MCF 10A (cell line): ENCODE measurements at regions of chr16 and their contacts with region 1.

Region 1: DNA sequence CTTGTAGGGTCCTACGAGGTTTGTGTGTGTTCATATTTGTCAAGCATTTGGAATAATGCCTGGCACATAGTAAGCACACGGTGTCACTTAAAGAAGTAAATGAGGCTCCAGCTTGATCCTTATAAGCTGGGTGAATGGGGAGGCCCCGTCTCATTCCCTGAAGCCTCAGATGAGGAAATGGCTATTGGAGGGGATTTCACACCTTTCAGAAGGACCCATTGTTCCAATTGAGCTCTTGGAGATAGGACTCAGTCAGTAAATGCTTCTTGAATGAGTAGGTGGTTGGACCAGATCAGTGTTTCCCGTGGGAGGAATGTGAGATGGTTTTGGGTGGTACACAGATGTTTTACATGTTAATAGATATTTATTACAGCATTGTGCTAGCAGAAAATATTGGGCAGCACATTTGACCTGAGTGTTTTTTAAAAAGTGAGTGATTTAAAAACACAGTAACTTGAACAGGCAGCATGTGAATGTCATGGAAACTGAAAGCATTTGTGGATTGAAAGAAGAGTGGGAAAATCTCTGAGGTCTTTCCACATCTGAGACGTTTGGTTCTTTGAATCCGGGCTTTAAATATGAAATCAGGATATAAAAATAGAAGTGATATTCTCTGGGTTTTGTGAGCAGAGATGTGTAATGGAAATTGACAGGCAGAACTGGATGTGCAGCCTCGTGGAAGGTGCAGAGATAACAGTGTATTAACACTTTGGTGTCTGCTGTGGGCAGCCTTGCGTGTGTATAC is 36.4 kb upstream of the ARHGAP17 start:
- DNase-seq: no peak
- H3K4me3 Mint-ChIP-seq: no peak overlapping the region
- H3K27ac Mint-ChIP-seq: peak overlapping the region; percentile 23
- H3K4me1 Mint-ChIP-seq: peaks cover 20% of the 10 kb centered on the region
- H3K27me3 Mint-ChIP-seq: no peaks in the 10 kb centered on the region
- CTCF ChIP-seq: no peak

Region 2: DNA sequence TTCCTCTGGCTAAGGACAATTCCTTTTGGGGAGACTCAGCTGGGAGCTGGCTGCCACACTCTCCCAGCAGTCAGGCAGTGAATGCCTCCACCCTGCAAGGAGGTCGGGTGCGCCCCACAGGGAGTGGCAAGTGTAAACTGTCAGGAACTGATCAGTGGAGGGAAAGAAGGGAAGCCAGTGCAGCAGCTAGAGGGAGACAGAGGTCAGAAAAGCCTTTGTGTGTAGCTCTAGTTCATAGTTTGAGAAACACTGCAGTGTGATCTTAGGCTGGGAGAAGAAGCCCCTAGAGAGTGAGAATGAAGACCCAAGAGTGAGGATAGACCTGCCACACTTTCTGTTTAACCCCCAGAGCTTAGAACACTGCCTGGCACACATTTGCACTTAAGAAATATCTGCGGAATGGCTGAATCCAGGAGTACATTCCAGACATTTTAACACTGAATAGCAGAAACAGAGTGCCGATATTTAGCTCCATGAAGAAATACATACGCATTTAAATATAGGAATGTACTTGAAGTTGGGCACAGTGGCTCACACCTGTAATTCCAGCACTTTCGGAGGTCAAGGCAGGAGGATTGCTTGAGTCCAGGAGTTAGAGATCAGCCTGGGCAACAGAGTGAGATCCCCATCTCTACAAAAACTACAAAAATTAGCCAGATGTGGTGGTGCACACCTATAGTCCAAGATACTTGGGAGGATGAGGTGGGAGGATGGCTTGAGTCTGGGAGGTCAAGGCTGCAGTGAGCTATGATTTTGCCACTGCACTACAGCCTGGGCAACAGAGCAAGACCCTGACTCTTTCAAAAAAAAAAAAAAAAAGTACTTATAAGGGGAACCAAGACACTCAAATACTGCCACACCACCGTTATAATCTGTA is 216.9 kb before region 1 on chr16:
- CTCF ChIA-PET with region 1: interaction called, 3 read pairs
- POLR2A ChIA-PET with region 1: no interaction called
- intact Hi-C with region 1: loop called (anchors 1 kb)
- DNase-seq: peak; percentile 66
- H3K4me3 Mint-ChIP-seq: no peak overlapping the region
- H3K27ac Mint-ChIP-seq: no peak overlapping the region
- H3K4me1 Mint-ChIP-seq: peaks cover 10% of the 10 kb centered on the region
- H3K27me3 Mint-ChIP-seq: no peaks in the 10 kb centered on the region
- CTCF ChIP-seq: peak; percentile 52

Region 3: GRCh38 chr16:25014500-25015147 is 37.0 kb before region 1 on chr16:
- CTCF ChIA-PET with region 1: interaction called, 4 read pairs
- POLR2A ChIA-PET with region 1: interaction called, 13 read pairs
- intact Hi-C with region 1: loop called (anchors 2 kb)
- DNase-seq: peak; percentile 49
- H3K4me3 Mint-ChIP-seq: peak overlapping the region; percentile 95
- H3K27ac Mint-ChIP-seq: peak overlapping the region; percentile 97
- H3K4me1 Mint-ChIP-seq: peaks cover 22% of the 10 kb centered on the region
- H3K27me3 Mint-ChIP-seq: no peaks in the 10 kb centered on the region
- CTCF ChIP-seq: no peak

Region 4: DNA sequence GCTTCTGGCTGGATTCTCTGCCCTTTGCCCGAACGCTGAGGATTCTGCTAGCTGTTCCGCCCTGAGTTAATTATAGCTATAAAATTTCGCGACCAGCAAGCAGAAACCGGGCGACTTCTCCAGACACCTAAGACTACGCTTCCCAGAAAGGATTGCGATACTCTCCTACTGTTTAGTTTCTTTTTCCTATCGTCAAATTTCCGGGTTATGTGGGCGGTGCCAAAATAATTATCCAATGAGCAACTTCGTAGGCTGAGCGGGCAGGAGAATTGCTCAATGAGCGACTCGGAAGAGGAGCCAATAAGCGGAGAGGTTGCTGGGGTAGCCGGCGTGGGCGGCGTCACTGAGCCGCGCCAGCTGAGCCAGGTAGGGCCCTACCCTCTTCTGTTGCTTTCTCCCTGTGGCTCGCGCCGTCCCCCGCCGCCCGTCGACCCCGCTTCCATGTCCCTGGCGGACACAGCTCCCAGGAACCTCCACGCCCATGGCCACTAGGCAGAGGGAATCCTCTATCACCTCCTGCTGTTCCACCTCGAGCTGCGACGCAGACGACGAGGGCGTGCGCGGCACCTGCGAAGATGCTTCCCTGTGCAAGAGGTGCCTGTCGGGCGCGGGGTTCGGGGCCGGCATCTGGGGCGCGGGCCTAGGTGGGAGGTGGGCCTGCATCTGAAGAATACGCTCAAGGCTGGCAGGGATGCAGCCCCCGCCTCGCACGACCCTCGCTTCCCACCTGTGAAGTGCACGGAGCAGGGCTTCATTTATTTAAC is 60.0 kb after region 1 on chr16 and contains the start of gene LCMT1:
- CTCF ChIA-PET with region 1: interaction called, 7 read pairs
- POLR2A ChIA-PET with region 1: interaction called, 16 read pairs
- intact Hi-C with region 1: loop called (anchors 2 kb)
- DNase-seq: peak; percentile 98
- H3K4me3 Mint-ChIP-seq: peak within 1 kb of the TSS; percentile 93
- H3K27ac Mint-ChIP-seq: peak within 1 kb of the TSS; percentile 92
- H3K4me1 Mint-ChIP-seq: peaks cover 41% of the 10 kb centered on the region
- H3K27me3 Mint-ChIP-seq: no peaks in the 10 kb centered on the region
- CTCF ChIP-seq: no peak
- total RNA-seq, gene LCMT1: 28.1 and 36.3 TPM in 2 replicates

Region 5: DNA sequence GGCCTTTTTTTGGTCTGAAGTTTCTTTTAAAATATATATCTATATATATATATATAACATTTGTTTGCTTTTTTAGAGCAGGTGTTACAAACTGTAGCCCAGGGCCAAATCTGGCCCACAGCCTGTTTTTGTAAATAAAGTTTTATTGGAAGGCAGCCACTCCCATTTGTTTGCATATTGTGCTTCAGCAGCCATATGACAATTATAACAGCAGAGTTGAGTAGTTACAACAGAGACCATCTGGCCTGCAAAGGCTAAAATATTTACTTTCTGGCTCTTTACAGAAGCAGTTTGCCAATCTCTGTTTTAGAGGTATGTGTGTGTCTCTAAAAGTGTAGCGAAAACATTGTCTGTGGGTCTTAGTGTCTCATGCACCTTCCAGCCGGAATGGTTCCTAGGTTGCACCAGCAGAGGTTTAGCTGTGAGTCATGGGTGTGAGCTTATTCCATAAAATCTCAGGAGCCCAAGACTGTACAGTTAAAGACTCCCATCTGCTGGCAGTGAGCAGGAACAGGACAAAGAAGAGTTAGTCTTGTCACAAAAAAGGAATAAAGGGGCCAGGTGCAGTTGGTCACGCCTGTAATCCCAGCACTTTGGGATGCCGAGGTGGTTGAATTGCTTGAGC is 83.8 kb after region 1 on chr16:
- CTCF ChIA-PET with region 1: no interaction called
- POLR2A ChIA-PET with region 1: no interaction called
- intact Hi-C with region 1: loop called (anchors 2 kb)
- DNase-seq: peak; percentile 36
- H3K4me3 Mint-ChIP-seq: no peak overlapping the region
- H3K27ac Mint-ChIP-seq: no peak overlapping the region
- H3K4me1 Mint-ChIP-seq: no peaks in the 10 kb centered on the region
- H3K27me3 Mint-ChIP-seq: no peaks in the 10 kb centered on the region
- CTCF ChIP-seq: peak; percentile 21

Region 6: GRCh38 chr16:25289466-25289865 is 237.9 kb after region 1 on chr16:
- CTCF ChIA-PET with region 1: no interaction called
- POLR2A ChIA-PET with region 1: no interaction called
- intact Hi-C with region 1: no loop called
- DNase-seq: no peak
- H3K4me3 Mint-ChIP-seq: no peak overlapping the region
- H3K27ac Mint-ChIP-seq: no peak overlapping the region
- H3K4me1 Mint-ChIP-seq: no peaks in the 10 kb centered on the region
- H3K27me3 Mint-ChIP-seq: no peaks in the 10 kb centered on the region
- CTCF ChIP-seq: no peak